PC-9 (cell line): ENCODE measurements at regions of chr11 and their contacts with region 1.

Region 1: DNA sequence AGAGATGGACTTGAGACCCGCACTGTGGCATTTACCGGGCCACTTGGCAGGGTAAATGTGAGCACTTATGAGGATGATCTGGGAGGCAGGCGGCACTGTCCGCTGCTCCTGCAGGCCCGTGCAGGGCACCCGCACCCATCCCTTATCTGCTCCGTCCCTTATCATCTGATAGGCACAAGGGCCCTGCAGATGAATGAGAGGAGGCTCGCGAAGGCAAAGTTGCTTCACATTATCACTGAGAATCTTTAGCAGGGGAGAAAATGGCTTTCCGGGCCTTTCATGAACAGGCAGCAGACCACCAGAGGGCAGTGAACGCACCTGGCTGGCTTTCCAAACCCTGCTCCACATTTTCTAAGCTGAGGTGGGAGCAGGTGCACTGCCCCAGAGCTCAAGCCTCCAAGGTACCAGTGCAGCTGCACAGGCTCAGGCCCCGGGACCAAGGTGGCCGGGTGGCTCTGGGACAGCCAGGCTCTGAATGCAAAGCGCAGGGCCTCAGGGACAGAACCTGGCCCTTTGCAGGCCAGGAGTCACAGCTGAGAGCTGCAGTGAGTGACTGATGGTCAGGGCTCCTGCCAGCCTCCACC is 165.6 kb downstream of the SHANK2 start:
- DNase-seq: peak in 1 of 2 experiments; percentile 46
- H3K4me3 ChIP-seq: no peak overlapping the region
- H3K27ac ChIP-seq: no peak overlapping the region
- H3K4me1 ChIP-seq: no peaks in the 10 kb centered on the region
- H3K27me3 ChIP-seq: no peaks in the 10 kb centered on the region
- CTCF ChIP-seq: peak; percentile 73

Region 2: GRCh38 chr11:69638941-69639681 is 1447.7 kb before region 1 on chr11:
- CTCF ChIA-PET with region 1: no interaction called
- POLR2A ChIA-PET with region 1: no interaction called
- intact Hi-C with region 1: no loop called
- DNase-seq: peak; percentile 95 to 97
- H3K4me3 ChIP-seq: peak overlapping the region; percentile 99
- H3K27ac ChIP-seq: peak overlapping the region; percentile 93
- H3K4me1 ChIP-seq: peaks cover 29% of the 10 kb centered on the region
- H3K27me3 ChIP-seq: no peaks in the 10 kb centered on the region
- CTCF ChIP-seq: no peak

Region 3: GRCh38 chr11:71262069-71262468 is 175.3 kb after region 1 on chr11:
- CTCF ChIA-PET with region 1: interaction called, 11 read pairs
- POLR2A ChIA-PET with region 1: no interaction called
- intact Hi-C with region 1: no loop called
- DNase-seq: peak in 1 of 2 experiments; percentile 33
- H3K4me3 ChIP-seq: no peak overlapping the region
- H3K27ac ChIP-seq: no peak overlapping the region
- H3K4me1 ChIP-seq: no peaks in the 10 kb centered on the region
- H3K27me3 ChIP-seq: no peaks in the 10 kb centered on the region
- CTCF ChIP-seq: no peak